Caco-2 (cell line): ENCODE measurements at regions of chr4 and their contacts with region 1.

Region 1: DNA sequence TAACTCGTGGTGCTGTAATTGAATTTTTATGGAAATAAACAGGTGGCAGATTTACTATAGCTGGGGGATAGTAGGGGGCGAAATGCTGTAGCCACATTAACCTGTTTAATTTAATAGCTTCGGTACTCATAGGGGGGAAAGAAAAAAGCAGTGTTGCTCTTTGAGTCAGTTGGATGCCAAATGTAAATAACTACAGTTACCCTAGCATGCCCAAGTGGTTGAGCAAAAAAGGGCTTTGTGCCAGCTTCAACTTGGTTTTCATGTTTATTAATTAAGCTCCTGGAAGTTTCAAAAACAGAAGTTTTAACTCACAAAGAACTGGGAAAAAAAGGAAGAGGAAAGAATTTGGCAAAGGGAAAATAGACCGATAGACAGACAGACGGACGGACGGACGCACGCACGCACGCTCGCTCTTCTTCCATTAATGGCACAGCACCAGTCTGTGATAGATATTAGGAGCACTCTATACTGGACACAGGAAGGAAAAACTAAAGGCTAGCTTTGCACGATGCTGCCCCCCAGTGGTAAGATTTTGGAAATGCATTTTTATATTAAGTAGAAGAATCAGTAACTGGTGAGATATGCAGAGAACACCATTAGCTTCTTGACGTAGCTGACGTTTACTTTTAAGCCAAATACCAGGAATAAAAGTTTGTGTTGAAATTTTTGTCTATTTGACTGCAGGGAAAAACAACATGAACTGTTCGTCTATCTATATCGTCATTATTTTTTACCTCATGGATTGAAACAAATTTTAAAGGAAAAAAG is 151.8 kb downstream of the SLC7A11 start:
- DNase-seq: peak; percentile 59 to 79
- H3K4me3 ChIP-seq: no peak overlapping the region; the same call in 1 of the 2 replicates
- H3K4me3 Mint-ChIP-seq: peak overlapping the region; percentile 69
- H3K27ac Mint-ChIP-seq: no peak overlapping the region
- H3K4me1 ChIP-seq: peaks cover 10% of the 10 kb centered on the region; the same call in 1 of the 2 replicates
- H3K4me1 Mint-ChIP-seq: peaks cover 21% of the 10 kb centered on the region
- H3K27me3 ChIP-seq: no peaks in the 10 kb centered on the region
- H3K27me3 Mint-ChIP-seq: no peaks in the 10 kb centered on the region
- CTCF ChIP-seq: peak; percentile 55 to 71

Region 2: DNA sequence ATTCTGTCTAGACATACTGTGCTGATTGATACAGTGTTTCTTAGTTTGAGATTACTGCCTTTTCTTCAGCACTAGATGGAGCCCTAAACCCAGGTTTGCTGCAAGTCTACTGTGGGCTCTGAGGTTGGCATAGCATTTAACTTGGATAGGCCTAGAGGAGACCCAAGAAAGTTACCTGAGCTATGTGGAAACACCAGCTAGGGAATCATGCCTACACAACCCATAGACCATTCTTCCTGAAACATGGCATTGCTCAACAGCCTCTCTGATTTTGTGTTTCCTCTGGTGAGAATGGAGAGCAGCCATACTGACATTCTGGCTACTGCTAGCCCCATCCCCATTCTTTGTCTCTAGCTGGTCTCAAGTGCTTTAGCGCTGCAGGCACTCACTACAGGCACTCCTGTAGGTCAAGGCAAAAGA is 270.4 kb before region 1 on chr4:
- CTCF ChIA-PET with region 1: interaction called, 5 read pairs
- POLR2A ChIA-PET with region 1: no interaction called
- intact Hi-C with region 1: loop called (anchors 1 kb)
- DNase-seq: peak; percentile 46 to 58
- H3K4me3 ChIP-seq: no peak overlapping the region
- H3K4me3 Mint-ChIP-seq: no peak overlapping the region
- H3K27ac Mint-ChIP-seq: no peak overlapping the region
- H3K4me1 ChIP-seq: no peaks in the 10 kb centered on the region
- H3K4me1 Mint-ChIP-seq: no peaks in the 10 kb centered on the region
- H3K27me3 ChIP-seq: no peaks in the 10 kb centered on the region
- H3K27me3 Mint-ChIP-seq: no peaks in the 10 kb centered on the region
- CTCF ChIP-seq: peak; percentile 64 to 76

Region 3: DNA sequence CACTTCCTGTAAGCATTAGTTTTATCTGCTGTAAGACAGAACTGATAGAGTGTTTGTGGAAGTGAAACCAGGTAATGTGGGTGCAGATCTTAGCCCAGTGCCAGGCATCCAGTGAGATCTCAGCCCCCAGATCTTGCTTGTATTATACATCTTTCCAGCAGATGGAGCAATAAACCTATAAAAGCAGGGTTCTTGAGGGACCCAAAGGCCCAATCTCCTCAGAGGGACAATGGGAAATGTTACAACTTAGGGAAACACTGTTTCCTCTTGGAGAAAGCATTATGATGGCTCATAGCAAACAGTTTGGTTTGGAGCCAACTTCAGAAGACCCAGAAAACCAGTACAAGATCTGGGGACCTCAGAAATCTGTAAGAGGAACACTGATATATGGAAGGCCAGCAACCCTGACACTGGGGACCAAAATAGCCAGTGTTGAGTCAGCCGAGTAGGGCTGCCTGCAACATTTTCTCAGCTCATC is 54.5 kb before region 1 on chr4:
- CTCF ChIA-PET with region 1: interaction called, 15 read pairs
- POLR2A ChIA-PET with region 1: no interaction called
- intact Hi-C with region 1: loop called (anchors 1 kb)
- DNase-seq: peak in 1 of 2 experiments; percentile 56
- H3K4me3 ChIP-seq: no peak overlapping the region
- H3K4me3 Mint-ChIP-seq: no peak overlapping the region
- H3K27ac Mint-ChIP-seq: no peak overlapping the region
- H3K4me1 ChIP-seq: no peaks in the 10 kb centered on the region
- H3K4me1 Mint-ChIP-seq: peaks cover under 1% of the 10 kb centered on the region
- H3K27me3 ChIP-seq: no peaks in the 10 kb centered on the region
- H3K27me3 Mint-ChIP-seq: no peaks in the 10 kb centered on the region
- CTCF ChIP-seq: peak; percentile 58 to 67

Region 4: GRCh38 chr4:138182838-138183426 is 92.6 kb after region 1 on chr4:
- CTCF ChIA-PET with region 1: interaction called, 7 read pairs
- POLR2A ChIA-PET with region 1: no interaction called
- intact Hi-C with region 1: loop called (anchors 1 kb)
- DNase-seq: peak in 1 of 2 experiments; percentile 45
- H3K4me3 ChIP-seq: no peak overlapping the region
- H3K4me3 Mint-ChIP-seq: no peak overlapping the region
- H3K27ac Mint-ChIP-seq: no peak overlapping the region
- H3K4me1 ChIP-seq: no peaks in the 10 kb centered on the region
- H3K4me1 Mint-ChIP-seq: no peaks in the 10 kb centered on the region
- H3K27me3 ChIP-seq: no peaks in the 10 kb centered on the region
- H3K27me3 Mint-ChIP-seq: no peaks in the 10 kb centered on the region
- CTCF ChIP-seq: peak; percentile 50 to 60

Region 5: GRCh38 chr4:138680989-138681604 is 590.8 kb after region 1 on chr4:
- CTCF ChIA-PET with region 1: no interaction called
- POLR2A ChIA-PET with region 1: no interaction called
- intact Hi-C with region 1: loop called (anchors 1 kb)
- DNase-seq: peak; percentile 63 to 79
- H3K4me3 ChIP-seq: no peak overlapping the region
- H3K4me3 Mint-ChIP-seq: no peak overlapping the region
- H3K27ac Mint-ChIP-seq: no peak overlapping the region
- H3K4me1 ChIP-seq: peaks cover 10% of the 10 kb centered on the region
- H3K4me1 Mint-ChIP-seq: peaks cover 11% of the 10 kb centered on the region
- H3K27me3 ChIP-seq: no peaks in the 10 kb centered on the region
- H3K27me3 Mint-ChIP-seq: no peaks in the 10 kb centered on the region
- CTCF ChIP-seq: peak; percentile 72 to 89